ENCODE measurements at regions of chr22 and their contacts with region 1.

Region 1: GRCh38 chr22:46035742-46036557 is 59.0 kb upstream of the WNT7B start:
- DNase-seq: peak; percentile 99
- ATAC-seq: peak; percentile 95
- H3K4me3 Mint-ChIP-seq: peak overlapping the region; percentile 80
- H3K27ac Mint-ChIP-seq: peak overlapping the region; percentile 91
- H3K4me1 Mint-ChIP-seq: peaks cover 15% of the 10 kb centered on the region
- H3K27me3 Mint-ChIP-seq: no peaks in the 10 kb centered on the region

Region 2: GRCh38 chr22:46006379-46007002 is 29.5 kb before region 1 on chr22:
- CTCF ChIA-PET with region 1: interaction called, 46 read pairs
- POLR2A ChIA-PET with region 1: interaction called, 4 read pairs
- intact Hi-C with region 1: no loop called
- DNase-seq: peak; percentile 94
- ATAC-seq: peak; percentile 91
- H3K4me3 Mint-ChIP-seq: no peak overlapping the region
- H3K27ac Mint-ChIP-seq: no peak overlapping the region
- H3K4me1 Mint-ChIP-seq: peaks cover 7% of the 10 kb centered on the region
- H3K27me3 Mint-ChIP-seq: no peaks in the 10 kb centered on the region

Region 3: DNA sequence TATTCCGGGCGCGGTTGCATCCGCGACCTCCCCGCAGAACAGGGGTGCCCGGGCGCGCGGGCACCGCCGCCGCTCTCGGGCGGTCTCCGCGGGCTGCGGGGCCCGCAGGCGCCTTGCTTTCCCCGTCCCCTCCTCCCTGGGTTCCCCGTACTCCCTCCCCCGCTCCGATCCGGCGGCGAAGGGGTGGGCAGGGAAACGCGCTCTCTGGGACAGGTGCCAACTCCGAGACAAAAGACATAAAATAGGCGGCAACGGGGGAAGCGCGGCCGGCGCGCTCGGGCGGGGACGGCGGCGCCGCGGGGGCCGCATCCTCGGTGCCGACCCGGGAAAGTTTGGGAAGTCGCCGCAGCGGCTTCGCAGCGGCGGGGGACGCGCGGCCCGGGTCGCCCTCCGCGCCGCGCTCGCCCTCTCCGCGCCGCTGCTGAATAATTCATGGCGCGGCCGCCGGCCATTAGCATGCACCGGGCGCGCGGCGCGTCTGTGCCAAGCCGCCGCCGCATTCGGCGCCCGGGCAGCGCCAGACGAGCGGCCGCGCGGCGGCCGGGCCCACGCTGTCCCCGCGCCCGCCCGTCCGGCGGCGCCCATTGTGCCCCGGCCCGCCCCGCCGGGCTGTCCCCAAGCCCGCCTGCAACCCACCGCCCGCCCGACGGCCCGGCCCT is 35.6 kb after region 1 on chr22:
- CTCF ChIA-PET with region 1: interaction called, 11 read pairs
- POLR2A ChIA-PET with region 1: interaction called, 10 read pairs
- intact Hi-C with region 1: loop called (anchors 1 kb)
- DNase-seq: peak; percentile 80
- ATAC-seq: peak; percentile 30
- H3K4me3 Mint-ChIP-seq: peak overlapping the region; percentile 74
- H3K27ac Mint-ChIP-seq: peak overlapping the region; percentile 69
- H3K4me1 Mint-ChIP-seq: peaks cover 40% of the 10 kb centered on the region
- H3K27me3 Mint-ChIP-seq: no peaks in the 10 kb centered on the region

Region 4: DNA sequence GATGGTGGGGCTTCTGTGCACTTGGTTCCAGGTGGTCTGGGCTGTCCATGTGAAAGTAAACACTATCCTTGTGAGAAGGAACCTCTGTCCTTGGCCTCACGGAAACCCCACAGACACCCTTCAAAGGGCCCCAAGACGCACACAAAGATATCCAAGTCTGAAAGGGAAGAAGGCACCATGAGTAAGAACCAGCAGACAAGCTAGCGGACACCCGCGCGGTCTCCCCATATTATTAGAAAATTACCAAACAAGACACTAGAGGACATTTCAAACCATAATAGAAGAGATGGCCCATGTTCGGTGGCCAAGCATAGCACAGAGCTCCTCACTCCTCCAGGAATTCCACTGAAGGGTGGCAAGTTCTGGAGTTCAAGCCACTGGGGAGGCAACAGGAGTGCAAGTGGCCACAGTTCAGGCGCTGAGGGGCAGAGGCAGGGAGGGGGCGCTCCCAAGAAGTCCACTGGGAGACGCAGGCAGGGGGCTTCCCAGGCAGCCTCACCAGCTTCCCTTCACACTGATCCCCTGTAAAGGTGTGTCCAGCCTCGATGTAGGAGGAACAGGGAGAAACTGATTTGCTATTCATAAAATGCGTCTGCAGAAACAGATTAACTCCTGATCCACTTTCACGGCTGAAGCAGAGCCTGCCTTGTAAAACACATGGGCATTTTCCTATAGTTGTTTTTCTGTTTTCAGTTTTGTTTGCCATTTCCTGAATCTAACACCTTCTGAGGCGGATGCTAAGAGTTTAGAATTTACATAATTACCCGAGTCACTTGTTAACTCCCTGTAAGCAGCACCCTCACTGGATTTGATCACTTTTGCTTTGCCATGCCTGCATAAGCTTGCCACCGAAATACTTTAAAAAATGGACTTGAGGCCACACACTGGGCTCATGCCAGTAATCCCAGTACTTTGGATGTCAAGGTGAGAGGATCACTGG is 105.3 kb after region 1 on chr22:
- CTCF ChIA-PET with region 1: no interaction called
- POLR2A ChIA-PET with region 1: no interaction called
- intact Hi-C with region 1: no loop called
- DNase-seq: no peak
- ATAC-seq: no peak
- H3K4me3 Mint-ChIP-seq: no peak overlapping the region
- H3K27ac Mint-ChIP-seq: no peak overlapping the region
- H3K4me1 Mint-ChIP-seq: no peaks in the 10 kb centered on the region
- H3K27me3 Mint-ChIP-seq: no peaks in the 10 kb centered on the region

Region 5: GRCh38 chr22:46250035-46250782 is 214.3 kb after region 1 on chr22 and contains the start of gene CDPF1:
- CTCF ChIA-PET with region 1: no interaction called
- POLR2A ChIA-PET with region 1: no interaction called
- intact Hi-C with region 1: loop called in 1 of 2 experiments (anchors 1 kb)
- DNase-seq: peak; percentile 96
- ATAC-seq: peak; percentile 92
- H3K4me3 Mint-ChIP-seq: peak within 1 kb of the TSS; percentile 79
- H3K27ac Mint-ChIP-seq: peak within 1 kb of the TSS; percentile 80
- H3K4me1 Mint-ChIP-seq: peaks cover 25% of the 10 kb centered on the region
- H3K27me3 Mint-ChIP-seq: no peaks in the 10 kb centered on the region
- total RNA-seq, gene CDPF1: 8.1 to 8.8 TPM

Region 6: DNA sequence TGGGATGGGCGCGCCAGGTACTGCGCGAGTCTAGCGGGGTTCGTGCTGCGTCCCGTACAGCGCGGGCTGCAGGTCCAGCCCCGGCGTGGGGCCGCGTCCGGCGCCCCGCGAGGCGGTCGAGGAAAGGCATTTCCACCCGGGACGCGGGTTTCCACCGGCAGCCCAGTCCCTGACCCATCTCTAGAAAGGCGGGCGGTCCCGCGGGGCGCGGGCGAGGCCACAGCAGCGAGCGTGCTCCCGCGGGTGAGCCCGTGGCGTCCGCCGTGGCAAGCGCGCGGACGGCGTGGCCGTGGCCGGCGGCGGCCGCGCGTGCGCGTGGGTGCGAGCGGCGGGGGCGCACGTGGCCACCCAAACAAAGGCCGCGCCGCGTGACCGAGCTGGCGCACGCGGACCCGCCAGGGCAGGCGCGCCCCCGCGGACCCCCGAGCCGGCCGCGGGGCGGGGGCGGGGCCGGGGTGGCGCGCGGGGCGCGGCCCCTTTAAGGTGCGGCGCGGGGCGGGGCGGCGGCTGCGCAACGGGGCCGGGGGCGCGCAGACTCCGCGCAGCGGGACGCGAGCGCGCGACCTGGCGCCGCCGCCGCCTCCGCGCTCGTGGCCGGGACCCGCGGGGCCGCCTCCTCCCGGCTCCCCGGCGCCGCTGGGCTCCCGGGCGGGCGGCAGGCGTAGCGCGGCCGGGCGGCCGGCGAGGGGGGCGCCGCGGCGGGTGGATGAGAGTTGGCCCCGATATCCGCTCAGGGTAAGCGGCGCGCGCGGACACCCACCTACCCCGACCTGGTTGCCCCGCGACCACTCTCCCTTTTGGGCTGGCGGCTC is 540.8 kb after region 1 on chr22:
- CTCF ChIA-PET with region 1: no interaction called
- POLR2A ChIA-PET with region 1: no interaction called
- intact Hi-C with region 1: loop called in 1 of 2 experiments (anchors 5 kb)
- DNase-seq: peak; percentile 72
- ATAC-seq: peak; percentile 72
- H3K4me3 Mint-ChIP-seq: peak overlapping the region; percentile 73
- H3K27ac Mint-ChIP-seq: no peak overlapping the region
- H3K4me1 Mint-ChIP-seq: peaks cover 38% of the 10 kb centered on the region
- H3K27me3 Mint-ChIP-seq: no peaks in the 10 kb centered on the region